PC-9 (cell line): ENCODE measurements at regions of chr13 and their contacts with region 1.

Region 1: DNA sequence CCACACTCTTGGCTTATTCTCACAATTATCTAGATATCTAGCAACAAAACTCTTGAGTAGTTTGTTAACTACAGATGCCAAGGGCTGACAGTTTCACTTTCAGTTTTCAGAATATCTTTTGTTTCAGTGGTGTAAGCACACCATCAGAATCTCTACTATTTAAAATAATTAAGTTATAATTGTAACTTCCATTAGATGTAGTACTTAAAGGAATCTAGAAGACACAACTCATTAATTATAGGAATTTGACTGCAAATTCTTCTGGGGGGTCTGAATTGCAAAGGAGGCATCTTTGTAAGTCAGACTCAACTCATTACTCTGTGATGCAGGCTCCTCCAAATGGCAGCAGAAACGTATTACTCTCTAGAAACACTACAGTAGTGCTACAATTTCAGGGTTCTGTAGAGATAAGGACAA is 44.9 kb upstream of the USPL1 start:
- DNase-seq: no peak
- H3K4me3 ChIP-seq: no peak overlapping the region; the same call in 1 of the 2 replicates
- H3K27ac ChIP-seq: no peak overlapping the region
- H3K4me1 ChIP-seq: peaks cover 34% of the 10 kb centered on the region
- H3K27me3 ChIP-seq: no peaks in the 10 kb centered on the region
- CTCF ChIP-seq: no peak

Region 2: GRCh38 chr13:30216111-30216510 is 356.8 kb before region 1 on chr13:
- CTCF ChIA-PET with region 1: no interaction called
- POLR2A ChIA-PET with region 1: no interaction called
- intact Hi-C with region 1: no loop called
- DNase-seq: no peak
- H3K4me3 ChIP-seq: no peak overlapping the region
- H3K27ac ChIP-seq: no peak overlapping the region
- H3K4me1 ChIP-seq: no peaks in the 10 kb centered on the region
- H3K27me3 ChIP-seq: no peaks in the 10 kb centered on the region
- CTCF ChIP-seq: no peak

Region 3: DNA sequence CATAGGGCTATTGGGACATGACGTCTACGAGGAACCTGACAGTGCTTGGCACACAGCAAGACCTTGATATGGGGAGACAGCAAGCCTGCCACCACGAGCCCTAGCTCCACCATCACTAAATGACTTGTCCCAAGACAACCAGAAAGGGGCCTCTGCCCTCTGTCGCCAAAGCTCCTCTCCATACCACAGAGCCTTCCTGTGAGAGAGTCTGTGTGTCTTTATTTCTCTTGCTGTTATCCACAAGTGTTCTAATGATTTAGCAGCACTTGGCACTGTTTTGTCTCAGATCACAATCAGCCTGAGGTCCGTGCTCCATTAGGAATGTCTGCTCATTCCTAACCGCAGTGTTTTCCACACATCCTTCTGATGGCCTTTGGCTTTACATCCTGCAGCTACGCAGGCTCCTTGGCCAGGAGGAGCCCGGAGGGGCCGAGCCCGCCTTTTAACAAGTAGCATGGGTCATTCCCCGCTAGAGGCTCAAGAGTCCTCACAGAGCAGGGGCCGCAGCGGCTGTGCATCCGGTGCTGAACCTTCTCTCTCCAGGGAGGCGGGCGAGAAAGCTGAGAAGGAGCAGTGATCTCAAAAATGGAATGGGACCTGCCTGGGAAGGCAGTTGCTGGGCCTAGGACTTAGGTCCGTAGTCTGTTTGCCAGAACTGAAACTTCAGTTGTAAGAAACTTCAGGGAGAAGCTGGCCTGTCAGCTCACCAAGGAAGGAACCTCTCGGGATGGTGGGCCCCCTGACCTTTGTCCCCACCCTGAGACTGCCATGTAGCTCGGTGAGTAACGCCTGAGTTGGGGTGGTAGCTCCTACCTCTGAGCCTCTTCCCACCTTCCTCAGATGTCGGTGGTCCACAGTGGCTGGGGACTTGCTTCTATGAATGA is 46.0 kb before region 1 on chr13:
- CTCF ChIA-PET with region 1: no interaction called
- POLR2A ChIA-PET with region 1: no interaction called
- intact Hi-C with region 1: no loop called
- DNase-seq: no peak
- H3K4me3 ChIP-seq: no peak overlapping the region
- H3K27ac ChIP-seq: no peak overlapping the region
- H3K4me1 ChIP-seq: no peaks in the 10 kb centered on the region
- H3K27me3 ChIP-seq: no peaks in the 10 kb centered on the region
- CTCF ChIP-seq: no peak

Region 4: GRCh38 chr13:30551189-30551588 is 21.7 kb before region 1 on chr13:
- CTCF ChIA-PET with region 1: no interaction called
- POLR2A ChIA-PET with region 1: no interaction called
- intact Hi-C with region 1: no loop called
- DNase-seq: no peak
- H3K4me3 ChIP-seq: no peak overlapping the region
- H3K27ac ChIP-seq: no peak overlapping the region
- H3K4me1 ChIP-seq: 0 out of 2 replicates have a peak, but pooled peaks cover 5% of the 10 kb centered on the region
- H3K27me3 ChIP-seq: no peaks in the 10 kb centered on the region
- CTCF ChIP-seq: peak; percentile 63

Region 5: DNA sequence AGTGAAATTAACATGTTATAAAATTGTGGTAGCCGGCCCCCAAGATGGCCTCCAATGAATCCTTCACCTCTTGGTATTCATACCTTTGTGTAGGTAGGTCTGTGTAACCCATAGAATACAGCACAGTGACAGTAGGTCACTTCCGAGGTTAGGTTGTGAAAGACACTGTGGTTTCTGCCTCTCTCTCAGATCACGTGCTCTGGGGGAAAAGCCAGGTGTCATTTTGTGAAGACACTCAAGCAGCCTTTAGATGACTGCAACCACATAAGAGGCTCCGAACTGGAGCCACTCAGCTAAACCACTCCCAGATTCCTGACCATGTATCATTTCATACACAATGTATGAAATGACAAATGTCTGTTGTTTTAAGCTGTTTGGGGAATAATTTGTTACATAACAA is 35.0 kb after region 1 on chr13:
- CTCF ChIA-PET with region 1: no interaction called
- POLR2A ChIA-PET with region 1: no interaction called
- intact Hi-C with region 1: no loop called
- DNase-seq: no peak
- H3K4me3 ChIP-seq: no peak overlapping the region
- H3K27ac ChIP-seq: no peak overlapping the region
- H3K4me1 ChIP-seq: no peaks in the 10 kb centered on the region
- H3K27me3 ChIP-seq: no peaks in the 10 kb centered on the region
- CTCF ChIP-seq: no peak

Region 6: DNA sequence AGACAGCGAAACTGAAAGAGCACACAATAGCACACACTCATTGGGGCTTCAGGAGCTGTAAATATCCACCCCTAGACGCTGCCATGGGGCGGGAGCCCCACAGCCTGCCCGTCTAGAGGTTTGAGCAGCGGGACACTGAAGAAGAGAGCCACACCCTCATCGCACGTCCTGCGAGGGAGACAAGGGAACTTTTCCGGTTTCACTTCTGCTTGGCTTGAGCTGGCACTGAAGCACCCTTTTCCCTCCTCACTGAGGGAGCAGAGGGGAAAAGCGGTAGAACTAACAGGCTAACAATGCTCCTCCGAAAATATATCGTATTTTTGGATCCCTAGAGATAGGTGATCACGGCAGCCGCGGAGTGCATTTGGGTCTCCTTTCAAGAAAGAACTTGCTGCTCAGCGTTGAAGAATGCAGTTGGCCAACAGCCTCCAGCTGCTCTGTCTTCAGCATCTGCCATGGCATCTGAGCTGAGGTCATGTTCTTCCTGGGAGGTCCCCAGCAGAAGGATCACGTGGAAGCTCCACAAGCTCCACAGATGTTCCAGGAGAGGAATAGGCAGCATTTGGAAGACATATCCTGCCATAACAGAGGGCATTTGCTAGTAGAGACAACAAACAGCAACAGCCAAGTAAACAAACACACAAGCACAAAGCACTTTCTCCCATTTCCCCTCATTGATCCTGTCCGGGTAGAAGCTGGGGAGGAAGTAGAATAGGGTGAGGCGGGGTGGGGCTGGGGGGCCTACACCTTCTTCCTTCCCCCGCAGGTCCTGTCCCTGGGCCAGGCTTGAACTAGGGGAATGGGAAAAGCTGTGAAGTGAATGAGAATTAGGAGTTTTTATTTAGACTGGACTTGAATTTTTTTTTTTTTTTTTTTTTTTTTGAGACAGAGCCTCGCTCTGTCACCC is 117.7 kb after region 1 on chr13:
- CTCF ChIA-PET with region 1: no interaction called
- POLR2A ChIA-PET with region 1: interaction called, 22 read pairs
- intact Hi-C with region 1: no loop called
- DNase-seq: peak; percentile 26 to 73
- H3K4me3 ChIP-seq: peak overlapping the region; percentile 54
- H3K27ac ChIP-seq: no peak overlapping the region
- H3K4me1 ChIP-seq: peaks cover 13% of the 10 kb centered on the region
- H3K27me3 ChIP-seq: no peaks in the 10 kb centered on the region
- CTCF ChIP-seq: no peak

Region 7: DNA sequence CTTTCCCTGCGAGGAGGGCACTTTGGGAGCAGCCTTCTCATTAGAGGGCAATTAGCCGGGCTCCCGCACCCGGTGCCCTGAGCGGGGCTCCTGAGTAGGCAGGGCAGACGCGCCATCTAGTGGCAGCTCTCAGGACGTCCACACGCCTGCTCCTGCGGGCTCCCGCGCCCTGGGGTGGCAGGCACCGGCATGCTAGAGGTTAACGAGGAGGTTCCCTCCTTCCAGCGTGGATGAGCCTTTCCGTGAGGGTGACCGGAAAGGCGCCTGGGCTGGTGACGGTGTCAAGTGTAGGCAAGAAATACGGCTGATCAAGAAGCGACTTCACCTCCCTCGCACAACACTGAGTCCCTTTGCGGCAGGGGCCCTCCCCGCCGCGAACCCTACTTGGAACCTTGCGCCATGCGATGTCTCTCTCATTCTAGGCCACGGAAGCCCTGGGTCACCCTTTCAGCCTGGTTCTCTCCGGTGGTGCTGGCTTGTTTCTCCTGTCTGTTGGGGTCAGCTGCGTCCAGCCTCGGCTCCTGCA is 230.1 kb after region 1 on chr13:
- CTCF ChIA-PET with region 1: no interaction called
- POLR2A ChIA-PET with region 1: no interaction called
- intact Hi-C with region 1: loop called (anchors 5 kb)
- DNase-seq: peak in 1 of 2 experiments; percentile 57
- H3K4me3 ChIP-seq: no peak overlapping the region
- H3K27ac ChIP-seq: no peak overlapping the region
- H3K4me1 ChIP-seq: no peaks in the 10 kb centered on the region
- H3K27me3 ChIP-seq: no peaks in the 10 kb centered on the region
- CTCF ChIP-seq: peak; percentile 95

Region 8: GRCh38 chr13:30865123-30866049 is 292.5 kb after region 1 on chr13:
- CTCF ChIA-PET with region 1: no interaction called
- POLR2A ChIA-PET with region 1: no interaction called
- intact Hi-C with region 1: loop called (anchors 10 kb)
- DNase-seq: peak; percentile 57 to 65
- H3K4me3 ChIP-seq: no peak overlapping the region
- H3K27ac ChIP-seq: 0 out of 2 replicates have a peak overlapping the region, but pooled peaks have one; percentile 5
- H3K4me1 ChIP-seq: 0 out of 2 replicates have a peak, but pooled peaks cover 9% of the 10 kb centered on the region
- H3K27me3 ChIP-seq: no peaks in the 10 kb centered on the region
- CTCF ChIP-seq: peak; percentile 96

Region 9: DNA sequence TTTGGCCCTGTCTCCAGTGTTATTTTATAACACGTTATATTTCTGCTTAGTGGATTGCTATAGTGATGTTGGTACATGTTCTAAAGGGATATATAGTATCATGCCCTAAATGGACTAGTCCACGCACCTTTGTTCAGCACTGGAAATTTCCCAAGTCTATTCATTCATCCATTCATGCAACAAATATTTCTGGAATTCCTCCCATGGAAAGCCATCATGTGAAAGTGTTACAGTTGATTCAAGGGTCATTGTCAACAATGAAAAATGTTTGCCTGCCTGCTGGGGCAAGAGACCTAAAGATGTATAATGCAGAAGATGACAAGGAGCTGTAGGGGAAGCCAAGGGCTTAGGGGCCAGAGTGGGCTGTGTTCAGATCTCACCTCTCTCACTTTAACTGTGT is 599.7 kb after region 1 on chr13:
- CTCF ChIA-PET with region 1: no interaction called
- POLR2A ChIA-PET with region 1: interaction called, 22 read pairs
- intact Hi-C with region 1: no loop called
- DNase-seq: peak; percentile 25 to 88
- H3K4me3 ChIP-seq: peak overlapping the region; percentile 7; the same call in 1 of the 2 replicates
- H3K27ac ChIP-seq: peak overlapping the region; percentile 85
- H3K4me1 ChIP-seq: peaks cover 25% of the 10 kb centered on the region
- H3K27me3 ChIP-seq: no peaks in the 10 kb centered on the region
- CTCF ChIP-seq: no peak